CD8-positive, alpha-beta T cell (primary cell): ENCODE measurements at regions of chr1 and their contacts with region 1.

Region 1: GRCh38 chr1:161098210-161099068 is at the start of gene KLHDC9:
- DNase-seq: peak; percentile 16 to 87 (median 68)
- ATAC-seq: peak; percentile 67
- H3K4me3 ChIP-seq: peak within 1 kb of the TSS; percentile 54 to 65
- H3K4me3 Mint-ChIP-seq: peak within 1 kb of the TSS; percentile 89
- H3K27ac ChIP-seq: peak within 1 kb of the TSS in 1 of 2 experiments; percentile 47
- H3K27ac Mint-ChIP-seq: peak within 1 kb of the TSS; percentile 92
- H3K4me1 ChIP-seq: peaks cover 14% of the 10 kb centered on the region
- H3K4me1 Mint-ChIP-seq: peaks cover 24% of the 10 kb centered on the region
- H3K27me3 ChIP-seq: no peaks in the 10 kb centered on the region
- H3K27me3 Mint-ChIP-seq: no peaks in the 10 kb centered on the region
- CTCF ChIP-seq: no peak
- total RNA-seq, gene KLHDC9: not detected

Region 2: GRCh38 chr1:160837558-160838205 is 260.8 kb before region 1 on chr1:
- CTCF ChIA-PET with region 1: interaction called, 5 read pairs
- POLR2A ChIA-PET with region 1: interaction called, 5 read pairs
- intact Hi-C with region 1: loop called (anchors 5 kb)
- DNase-seq: peak; percentile 70 to 96 (median 88)
- ATAC-seq: peak; percentile 91
- H3K4me3 ChIP-seq: peak overlapping the region; percentile 17 to 34
- H3K4me3 Mint-ChIP-seq: peak overlapping the region; percentile 84
- H3K27ac ChIP-seq: peak overlapping the region; percentile 54 to 77
- H3K27ac Mint-ChIP-seq: peak overlapping the region; percentile 96
- H3K4me1 ChIP-seq: peaks cover 85% of the 10 kb centered on the region
- H3K4me1 Mint-ChIP-seq: peaks cover 84% of the 10 kb centered on the region
- H3K27me3 ChIP-seq: no peaks in the 10 kb centered on the region
- H3K27me3 Mint-ChIP-seq: no peaks in the 10 kb centered on the region
- CTCF ChIP-seq: peak; percentile 27

Region 3: GRCh38 chr1:160862203-160863060 is 236.0 kb before region 1 on chr1 and contains the start of gene CD244:
- CTCF ChIA-PET with region 1: no interaction called
- POLR2A ChIA-PET with region 1: no interaction called
- intact Hi-C with region 1: no loop called
- DNase-seq: peak; percentile 25 to 89 (median 50)
- ATAC-seq: peak; percentile 88
- H3K4me3 ChIP-seq: peak within 1 kb of the TSS; percentile 14 to 68
- H3K4me3 Mint-ChIP-seq: peak within 1 kb of the TSS; percentile 79
- H3K27ac ChIP-seq: peak within 1 kb of the TSS; percentile 11 to 73
- H3K27ac Mint-ChIP-seq: peak within 1 kb of the TSS; percentile 88
- H3K4me1 ChIP-seq: peaks cover 20% of the 10 kb centered on the region
- H3K4me1 Mint-ChIP-seq: peaks cover 40% of the 10 kb centered on the region
- H3K27me3 ChIP-seq: no peaks in the 10 kb centered on the region
- H3K27me3 Mint-ChIP-seq: no peaks in the 10 kb centered on the region
- CTCF ChIP-seq: no peak
- total RNA-seq, gene CD244: 2.1 to 2.6 TPM

Region 4: DNA sequence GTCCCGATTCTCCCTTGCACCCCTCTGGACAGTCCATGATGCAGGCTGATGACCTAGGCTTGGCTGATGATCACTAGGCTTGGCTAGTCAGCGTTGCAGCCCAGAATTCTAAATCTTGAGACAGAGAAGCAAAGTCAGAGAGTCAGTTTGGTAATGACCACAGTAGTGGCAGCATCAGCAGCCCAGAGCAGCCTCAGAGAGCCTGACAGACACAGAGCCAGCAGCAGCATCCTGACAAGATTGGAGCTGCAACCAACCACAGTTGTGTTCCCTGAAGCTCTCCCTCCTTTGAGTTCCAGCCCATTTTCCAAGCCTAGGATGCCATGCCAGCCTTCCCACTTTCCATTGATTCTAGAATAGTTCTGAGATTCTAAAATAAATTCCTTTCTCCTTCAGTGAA is 196.7 kb before region 1 on chr1:
- CTCF ChIA-PET with region 1: no interaction called
- POLR2A ChIA-PET with region 1: no interaction called
- intact Hi-C with region 1: no loop called
- DNase-seq: no peak
- ATAC-seq: no peak
- H3K4me3 ChIP-seq: no peak overlapping the region
- H3K4me3 Mint-ChIP-seq: no peak overlapping the region
- H3K27ac ChIP-seq: no peak overlapping the region
- H3K27ac Mint-ChIP-seq: no peak overlapping the region
- H3K4me1 ChIP-seq: no peaks in the 10 kb centered on the region
- H3K4me1 Mint-ChIP-seq: no peaks in the 10 kb centered on the region
- H3K27me3 ChIP-seq: no peaks in the 10 kb centered on the region
- H3K27me3 Mint-ChIP-seq: peaks cover 2% of the 10 kb centered on the region
- CTCF ChIP-seq: no peak

Region 5: GRCh38 chr1:161013488-161014230 is 84.8 kb before region 1 on chr1:
- CTCF ChIA-PET with region 1: interaction called, 10 read pairs
- POLR2A ChIA-PET with region 1: interaction called, 7 read pairs
- intact Hi-C with region 1: no loop called
- DNase-seq: peak; percentile 21 to 86 (median 70)
- ATAC-seq: peak; percentile 90
- H3K4me3 ChIP-seq: peak overlapping the region; percentile 34 to 51
- H3K4me3 Mint-ChIP-seq: peak overlapping the region; percentile 78
- H3K27ac ChIP-seq: peak overlapping the region; percentile 32 to 86
- H3K27ac Mint-ChIP-seq: peak overlapping the region; percentile 93
- H3K4me1 ChIP-seq: peaks cover 26% of the 10 kb centered on the region
- H3K4me1 Mint-ChIP-seq: peaks cover 35% of the 10 kb centered on the region
- H3K27me3 ChIP-seq: no peaks in the 10 kb centered on the region
- H3K27me3 Mint-ChIP-seq: no peaks in the 10 kb centered on the region
- CTCF ChIP-seq: no peak

Region 6: DNA sequence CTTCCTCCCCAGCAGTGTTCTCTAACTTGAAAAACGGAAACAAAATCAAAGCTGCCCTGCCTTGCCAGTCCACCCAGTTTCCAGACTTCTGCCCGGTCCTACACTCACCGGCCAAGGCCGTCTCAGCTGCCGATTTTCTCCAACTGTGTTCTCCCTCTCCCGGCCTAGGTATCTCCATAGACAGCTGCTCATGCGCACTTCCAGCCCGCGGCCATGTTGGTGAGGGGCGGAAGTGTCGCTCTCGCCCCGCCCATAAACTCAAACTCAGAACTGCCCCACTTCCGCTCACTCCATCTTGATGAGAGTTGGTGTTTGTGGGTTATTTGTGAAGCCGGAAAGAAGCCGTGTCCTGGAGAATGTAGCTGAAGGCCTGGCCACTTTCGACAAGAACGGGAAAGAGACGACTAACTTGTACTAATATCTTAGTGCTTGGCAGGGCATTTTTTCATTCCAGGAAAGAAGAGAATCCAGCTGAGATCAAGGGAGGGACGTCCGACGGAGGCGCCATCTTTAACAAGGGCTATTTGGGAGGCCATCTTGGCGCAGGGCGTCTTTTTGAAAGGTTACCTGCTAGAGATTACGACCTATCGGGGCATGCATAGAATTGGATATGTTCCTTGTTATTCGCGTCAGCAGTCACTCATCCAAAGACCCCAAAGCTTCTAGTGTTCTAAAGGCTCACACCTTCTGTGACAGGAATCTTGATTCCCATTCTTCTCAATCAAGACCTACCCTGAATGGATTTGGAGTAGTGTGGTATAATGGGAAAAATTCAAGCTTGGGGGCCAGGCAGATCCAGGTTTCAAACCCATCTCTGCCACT is 52.5 kb before region 1 on chr1 and contains the start of gene USF1:
- CTCF ChIA-PET with region 1: interaction called, 168 read pairs
- POLR2A ChIA-PET with region 1: interaction called, 44 read pairs
- intact Hi-C with region 1: loop called (anchors 1 kb)
- DNase-seq: peak; percentile 88 to 98 (median 92)
- ATAC-seq: peak; percentile 76
- H3K4me3 ChIP-seq: peak within 1 kb of the TSS; percentile 87 to 96
- H3K4me3 Mint-ChIP-seq: peak within 1 kb of the TSS; percentile 98
- H3K27ac ChIP-seq: peak within 1 kb of the TSS; percentile 82 to 91
- H3K27ac Mint-ChIP-seq: peak within 1 kb of the TSS; percentile 100
- H3K4me1 ChIP-seq: peaks cover 24% of the 10 kb centered on the region
- H3K4me1 Mint-ChIP-seq: peaks cover 50% of the 10 kb centered on the region
- H3K27me3 ChIP-seq: no peaks in the 10 kb centered on the region
- H3K27me3 Mint-ChIP-seq: no peaks in the 10 kb centered on the region
- CTCF ChIP-seq: no peak
- total RNA-seq, gene USF1: 95.6 to 98.8 TPM

Region 7: GRCh38 chr1:161071886-161072371 is 26.5 kb before region 1 on chr1:
- CTCF ChIA-PET with region 1: interaction called, 198 read pairs
- POLR2A ChIA-PET with region 1: interaction called, 70 read pairs
- intact Hi-C with region 1: loop called (anchors 1 kb)
- DNase-seq: peak; percentile 19 to 75 (median 54)
- ATAC-seq: no peak
- H3K4me3 ChIP-seq: no peak overlapping the region
- H3K4me3 Mint-ChIP-seq: no peak overlapping the region
- H3K27ac ChIP-seq: no peak overlapping the region
- H3K27ac Mint-ChIP-seq: peak overlapping the region; percentile 83
- H3K4me1 ChIP-seq: peaks cover 31% of the 10 kb centered on the region
- H3K4me1 Mint-ChIP-seq: peaks cover 40% of the 10 kb centered on the region
- H3K27me3 ChIP-seq: no peaks in the 10 kb centered on the region
- H3K27me3 Mint-ChIP-seq: no peaks in the 10 kb centered on the region
- CTCF ChIP-seq: peak; percentile 70

Region 8: GRCh38 chr1:161132410-161133219 is 34.2 kb after region 1 on chr1 and contains the start of gene DEDD:
- CTCF ChIA-PET with region 1: interaction called, 47 read pairs
- POLR2A ChIA-PET with region 1: interaction called, 3 read pairs
- intact Hi-C with region 1: loop called in 1 of 2 experiments (anchors 5 kb)
- DNase-seq: peak; percentile 75 to 97 (median 86)
- ATAC-seq: peak; percentile 93
- H3K4me3 ChIP-seq: peak within 1 kb of the TSS; percentile 66 to 97
- H3K4me3 Mint-ChIP-seq: no peak within 1 kb of the TSS
- H3K27ac ChIP-seq: peak within 1 kb of the TSS; percentile 80 to 87
- H3K27ac Mint-ChIP-seq: no peak within 1 kb of the TSS
- H3K4me1 ChIP-seq: peaks cover 52% of the 10 kb centered on the region
- H3K4me1 Mint-ChIP-seq: peaks cover 49% of the 10 kb centered on the region
- H3K27me3 ChIP-seq: no peaks in the 10 kb centered on the region
- H3K27me3 Mint-ChIP-seq: no peaks in the 10 kb centered on the region
- CTCF ChIP-seq: no peak
- total RNA-seq, gene DEDD: 32.4 to 34.6 TPM

Region 9: GRCh38 chr1:161342821-161343220 is 244.4 kb after region 1 on chr1:
- CTCF ChIA-PET with region 1: no interaction called
- POLR2A ChIA-PET with region 1: no interaction called
- intact Hi-C with region 1: no loop called
- DNase-seq: no peak
- ATAC-seq: no peak
- H3K4me3 ChIP-seq: no peak overlapping the region
- H3K4me3 Mint-ChIP-seq: no peak overlapping the region
- H3K27ac ChIP-seq: no peak overlapping the region
- H3K27ac Mint-ChIP-seq: no peak overlapping the region
- H3K4me1 ChIP-seq: no peaks in the 10 kb centered on the region
- H3K4me1 Mint-ChIP-seq: peaks cover 7% of the 10 kb centered on the region
- H3K27me3 ChIP-seq: no peaks in the 10 kb centered on the region
- H3K27me3 Mint-ChIP-seq: no peaks in the 10 kb centered on the region
- CTCF ChIP-seq: no peak